ENCODE measurements at regions of chr5 and their contacts with region 1.

Region 1: DNA sequence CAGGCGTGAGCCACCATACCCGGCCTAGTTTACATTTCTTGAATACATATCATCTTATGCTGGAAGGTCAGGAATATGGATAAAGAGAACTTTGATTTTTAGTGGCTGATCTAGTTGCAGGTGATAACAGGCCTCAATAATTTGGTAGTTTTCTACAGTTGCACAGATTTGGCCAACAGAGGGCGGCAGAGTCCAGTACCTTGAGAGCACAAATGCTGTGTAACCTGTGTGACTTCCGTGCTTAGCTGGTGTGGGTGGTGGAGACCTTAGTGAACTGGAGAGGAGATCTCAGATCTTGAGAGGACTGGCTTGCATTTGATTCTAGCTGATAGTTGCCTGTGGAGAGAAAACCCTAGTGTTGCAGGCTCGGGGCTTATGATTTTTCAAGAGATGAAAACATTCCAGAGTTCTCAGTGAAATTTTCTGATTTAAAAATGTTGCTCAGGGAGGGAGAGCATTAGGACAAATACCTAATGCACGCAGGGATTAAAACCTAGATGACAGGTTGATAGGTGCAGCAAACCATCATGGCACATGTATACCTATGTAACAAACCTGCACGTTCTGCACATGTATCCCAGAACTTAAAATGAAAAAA is 17.4 kb upstream of the GPR151 start:
- DNase-seq: peak; percentile 65
- H3K4me3 Mint-ChIP-seq: no peak overlapping the region
- H3K27ac Mint-ChIP-seq: no peak overlapping the region
- H3K4me1 Mint-ChIP-seq: peaks cover 9% of the 10 kb centered on the region
- H3K27me3 Mint-ChIP-seq: peaks cover 2% of the 10 kb centered on the region

Region 2: DNA sequence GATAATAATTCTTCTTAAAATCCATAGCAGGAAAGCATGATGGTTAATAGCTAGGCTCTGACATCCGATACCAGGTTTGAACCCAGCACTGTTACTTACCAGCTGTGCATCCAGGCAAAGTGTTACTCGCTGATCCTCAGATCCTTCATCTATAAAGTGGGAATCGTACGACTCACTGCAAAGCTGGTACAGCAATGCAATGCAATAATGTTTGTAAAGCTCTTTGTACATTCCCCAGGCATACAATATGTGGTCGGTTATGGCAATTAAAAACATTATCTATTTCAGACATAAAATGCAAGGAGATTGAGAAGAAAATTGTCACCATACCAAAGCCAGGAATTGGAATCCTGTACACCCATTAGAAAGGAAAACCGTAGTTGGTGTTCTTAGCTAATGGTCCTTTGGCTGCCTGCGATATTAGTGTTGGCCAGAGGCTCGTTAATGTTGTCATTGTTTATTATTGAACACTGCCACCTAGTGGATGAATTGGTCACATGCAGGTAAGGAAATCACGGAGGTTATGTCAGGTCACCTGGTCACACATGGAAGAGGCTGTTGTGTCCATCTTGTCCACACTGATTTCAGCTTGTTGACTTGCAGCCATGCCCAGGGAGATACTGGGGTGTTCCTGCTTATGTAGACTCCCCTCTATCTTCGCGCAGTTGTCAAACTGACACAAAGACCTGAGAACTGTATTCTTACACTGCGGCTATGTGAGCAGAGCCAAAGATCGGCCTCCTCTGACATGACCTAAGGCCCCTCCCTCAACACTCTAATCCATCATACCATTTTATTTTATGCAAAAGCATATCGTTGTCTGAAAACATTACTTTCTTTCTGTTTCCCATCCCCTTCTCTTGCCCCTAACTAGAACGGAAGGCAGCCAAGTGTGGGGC is 432.7 kb after region 1 on chr5:
- intact Hi-C with region 1: loop called (anchors 1 kb)
- DNase-seq: peak; percentile 25
- H3K4me3 Mint-ChIP-seq: no peak overlapping the region
- H3K27ac Mint-ChIP-seq: no peak overlapping the region
- H3K4me1 Mint-ChIP-seq: peaks cover 1% of the 10 kb centered on the region
- H3K27me3 Mint-ChIP-seq: peaks cover 4% of the 10 kb centered on the region

Region 3: DNA sequence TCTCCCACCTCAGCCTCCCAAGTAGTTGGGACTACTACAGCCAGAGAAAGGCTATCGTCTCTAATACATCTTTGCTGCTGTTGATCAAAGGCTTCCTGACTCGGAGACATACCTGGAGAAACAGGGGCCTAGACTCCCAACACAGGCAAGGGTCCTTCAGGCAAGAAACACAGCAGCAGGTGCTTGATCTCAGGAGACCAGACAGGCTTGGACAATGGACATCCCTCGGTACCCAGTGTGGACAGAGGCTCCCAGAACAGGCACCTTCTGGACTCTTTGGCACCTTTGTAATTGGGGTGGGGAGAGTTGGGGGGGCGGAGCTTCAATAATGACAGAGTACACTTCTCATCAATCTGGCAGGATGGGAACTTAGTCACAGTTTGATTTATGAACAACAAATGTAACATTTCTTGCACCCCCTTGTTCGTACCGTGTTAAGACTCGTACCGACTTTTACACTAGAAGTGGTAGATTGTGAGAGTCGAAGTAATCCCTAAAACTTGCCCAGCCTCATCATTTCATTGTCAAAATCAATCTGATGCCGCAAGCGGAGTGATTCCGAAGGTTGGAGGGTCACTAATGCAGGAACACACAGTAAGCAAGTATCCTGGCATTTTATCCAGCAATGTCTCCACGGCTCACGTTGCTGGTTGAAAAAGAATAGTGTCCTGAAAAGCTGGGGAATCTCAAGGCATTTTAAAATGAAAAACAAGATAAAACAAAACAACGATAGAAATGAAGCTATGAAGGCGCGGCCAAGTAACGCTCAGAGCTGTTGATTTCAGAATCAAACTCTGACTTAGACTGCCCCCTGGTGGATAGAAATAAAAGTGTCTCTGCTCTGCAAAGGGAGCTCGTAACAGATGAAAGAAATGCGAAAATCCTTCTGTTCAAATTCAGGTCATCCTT is 655.1 kb after region 1 on chr5:
- intact Hi-C with region 1: loop called (anchors 2 kb)
- DNase-seq: no peak
- H3K4me3 Mint-ChIP-seq: no peak overlapping the region
- H3K27ac Mint-ChIP-seq: no peak overlapping the region
- H3K4me1 Mint-ChIP-seq: peaks cover 1% of the 10 kb centered on the region
- H3K27me3 Mint-ChIP-seq: no peaks in the 10 kb centered on the region